ENCODE measurements at regions of chr6 and their contacts with region 1.

Region 1: DNA sequence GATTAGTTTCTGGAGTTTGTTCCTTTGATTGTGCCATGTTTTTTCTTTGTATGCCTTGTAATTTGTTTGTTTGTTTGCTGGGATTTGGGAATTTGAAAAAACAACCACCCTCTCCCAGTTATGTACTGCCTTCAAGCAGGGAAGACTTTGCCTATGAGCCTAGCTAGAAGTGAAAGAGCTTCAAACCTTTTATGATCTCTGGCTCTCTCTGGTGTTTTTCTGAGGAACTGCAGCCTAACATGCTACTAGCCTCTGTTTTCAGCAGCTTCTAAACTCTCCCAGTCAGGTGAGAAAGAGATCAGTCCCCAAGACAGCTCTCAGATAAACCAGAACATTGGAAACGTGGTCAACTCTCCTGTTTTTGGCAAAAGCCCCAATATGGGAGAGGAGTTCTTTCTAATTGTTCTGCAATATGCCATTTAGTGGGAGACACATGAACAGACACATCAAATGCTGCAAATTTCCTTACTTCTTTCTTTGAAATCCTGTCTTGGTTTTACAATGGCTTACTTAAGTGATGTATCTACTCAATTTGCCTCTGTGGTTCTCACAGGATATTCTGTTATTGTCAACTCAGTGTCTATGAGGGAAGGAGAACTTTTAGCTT is 58.9 kb upstream of the SERINC1 start:
- DNase-seq: peak; percentile 73
- H3K4me3 Mint-ChIP-seq: no peak overlapping the region
- H3K27ac Mint-ChIP-seq: no peak overlapping the region
- H3K4me1 Mint-ChIP-seq: no peaks in the 10 kb centered on the region
- H3K27me3 Mint-ChIP-seq: peaks cover 31% of the 10 kb centered on the region
- CTCF ChIP-seq: peak; percentile 86

Region 2: GRCh38 chr6:120876424-120876823 is 1654.1 kb before region 1 on chr6:
- CTCF ChIA-PET with region 1: no interaction called
- POLR2A ChIA-PET with region 1: no interaction called
- intact Hi-C with region 1: no loop called
- DNase-seq: no peak
- H3K4me3 Mint-ChIP-seq: no peak overlapping the region
- H3K27ac Mint-ChIP-seq: no peak overlapping the region
- H3K4me1 Mint-ChIP-seq: no peaks in the 10 kb centered on the region
- H3K27me3 Mint-ChIP-seq: no peaks in the 10 kb centered on the region
- CTCF ChIP-seq: no peak

Region 3: GRCh38 chr6:122432816-122433215 is 97.7 kb before region 1 on chr6:
- CTCF ChIA-PET with region 1: interaction called, 11 read pairs
- POLR2A ChIA-PET with region 1: no interaction called
- intact Hi-C with region 1: no loop called
- DNase-seq: no peak
- H3K4me3 Mint-ChIP-seq: no peak overlapping the region
- H3K27ac Mint-ChIP-seq: no peak overlapping the region
- H3K4me1 Mint-ChIP-seq: no peaks in the 10 kb centered on the region
- H3K27me3 Mint-ChIP-seq: no peaks in the 10 kb centered on the region
- CTCF ChIP-seq: no peak

Region 4: GRCh38 chr6:122484760-122485159 is 45.8 kb before region 1 on chr6:
- CTCF ChIA-PET with region 1: interaction called, 202 read pairs
- POLR2A ChIA-PET with region 1: no interaction called
- intact Hi-C with region 1: no loop called
- DNase-seq: no peak
- H3K4me3 Mint-ChIP-seq: no peak overlapping the region
- H3K27ac Mint-ChIP-seq: no peak overlapping the region
- H3K4me1 Mint-ChIP-seq: no peaks in the 10 kb centered on the region
- H3K27me3 Mint-ChIP-seq: no peaks in the 10 kb centered on the region
- CTCF ChIP-seq: no peak

Region 5: DNA sequence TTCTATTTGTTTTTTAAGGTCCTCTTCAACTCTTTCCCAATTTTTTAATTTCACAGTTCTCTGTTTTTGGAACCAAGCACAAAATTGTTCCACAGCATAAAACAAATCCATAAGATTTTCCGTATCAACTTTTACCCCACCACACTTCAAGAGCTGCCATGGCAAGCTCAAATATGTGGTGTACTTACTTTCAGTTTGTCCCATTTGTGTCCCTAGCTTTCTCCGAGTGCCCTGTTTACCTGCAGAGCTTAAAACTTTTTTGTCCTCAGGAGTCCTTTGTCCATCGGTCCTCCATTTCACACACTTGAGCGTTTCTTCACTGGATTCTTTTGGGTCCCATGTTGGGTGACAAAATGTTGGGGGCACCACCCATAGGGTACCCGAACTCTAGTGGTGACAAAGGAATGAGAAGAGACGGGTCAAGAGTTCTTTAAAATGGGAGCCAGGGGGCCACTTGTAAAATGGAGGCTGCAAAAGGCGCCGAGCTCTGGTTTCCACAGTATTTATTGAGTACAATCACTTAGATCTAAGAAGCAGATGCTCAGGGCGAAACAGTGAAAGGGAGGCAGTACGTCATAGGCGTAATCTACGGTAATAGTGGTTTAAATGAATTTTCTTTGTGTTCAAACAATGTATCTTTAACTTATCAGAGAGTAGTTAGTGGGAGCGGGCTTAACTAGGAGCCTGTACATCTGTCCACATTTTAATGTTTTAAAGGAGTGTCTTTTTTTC is 19.2 kb before region 1 on chr6:
- CTCF ChIA-PET with region 1: interaction called, 11 read pairs
- POLR2A ChIA-PET with region 1: no interaction called
- intact Hi-C with region 1: no loop called
- DNase-seq: no peak
- H3K4me3 Mint-ChIP-seq: no peak overlapping the region
- H3K27ac Mint-ChIP-seq: no peak overlapping the region
- H3K4me1 Mint-ChIP-seq: no peaks in the 10 kb centered on the region
- H3K27me3 Mint-ChIP-seq: no peaks in the 10 kb centered on the region
- CTCF ChIP-seq: no peak

Region 6: GRCh38 chr6:122548281-122548680 is 17.7 kb after region 1 on chr6:
- CTCF ChIA-PET with region 1: interaction called, 18 read pairs
- POLR2A ChIA-PET with region 1: no interaction called
- intact Hi-C with region 1: no loop called
- DNase-seq: no peak
- H3K4me3 Mint-ChIP-seq: no peak overlapping the region
- H3K27ac Mint-ChIP-seq: no peak overlapping the region
- H3K4me1 Mint-ChIP-seq: no peaks in the 10 kb centered on the region
- H3K27me3 Mint-ChIP-seq: no peaks in the 10 kb centered on the region
- CTCF ChIP-seq: no peak

Region 7: DNA sequence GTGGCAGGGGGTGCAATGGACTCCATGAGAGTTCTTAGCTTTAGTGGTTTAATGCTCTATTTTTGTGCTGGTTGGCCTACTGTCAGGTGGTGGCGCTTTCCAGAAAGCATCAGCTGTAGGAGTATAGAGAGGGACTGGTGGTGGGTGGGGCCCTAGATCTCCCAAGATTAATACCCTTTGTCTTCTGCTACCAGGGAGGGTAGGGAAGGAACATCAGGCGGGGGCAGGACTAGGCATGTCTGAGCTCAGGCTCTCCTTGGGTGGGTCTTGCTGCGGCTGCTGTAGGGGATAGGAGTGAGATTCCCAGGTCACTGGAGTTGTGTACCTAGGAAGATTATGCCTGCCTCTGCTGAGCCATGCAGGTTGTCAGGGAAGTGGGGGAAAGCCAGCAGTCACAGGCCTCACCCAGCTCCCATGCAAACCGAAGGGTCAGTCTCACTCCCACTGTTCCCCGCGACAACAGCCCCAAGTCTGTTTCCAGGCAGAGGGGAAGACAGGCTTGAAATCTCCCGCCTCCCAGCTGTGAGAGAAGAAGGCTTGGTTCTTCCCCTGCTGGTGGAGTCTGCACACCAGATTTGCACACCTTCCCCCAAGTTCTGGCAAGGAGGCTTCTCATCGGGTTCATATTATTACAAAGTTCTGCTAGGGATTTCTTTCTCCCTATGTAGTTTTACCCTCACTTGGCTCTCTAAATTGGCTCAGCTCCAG is 33.0 kb after region 1 on chr6:
- CTCF ChIA-PET with region 1: interaction called, 19 read pairs
- POLR2A ChIA-PET with region 1: interaction called, 3 read pairs
- intact Hi-C with region 1: no loop called
- DNase-seq: no peak
- H3K4me3 Mint-ChIP-seq: no peak overlapping the region
- H3K27ac Mint-ChIP-seq: no peak overlapping the region
- H3K4me1 Mint-ChIP-seq: no peaks in the 10 kb centered on the region
- H3K27me3 Mint-ChIP-seq: no peaks in the 10 kb centered on the region
- CTCF ChIP-seq: no peak

Region 8: GRCh38 chr6:122730775-122731386 is 200.3 kb after region 1 on chr6:
- CTCF ChIA-PET with region 1: interaction called, 12 read pairs
- POLR2A ChIA-PET with region 1: no interaction called
- intact Hi-C with region 1: no loop called
- DNase-seq: peak; percentile 63
- H3K4me3 Mint-ChIP-seq: no peak overlapping the region
- H3K27ac Mint-ChIP-seq: no peak overlapping the region
- H3K4me1 Mint-ChIP-seq: peaks cover 11% of the 10 kb centered on the region
- H3K27me3 Mint-ChIP-seq: no peaks in the 10 kb centered on the region
- CTCF ChIP-seq: peak; percentile 67

Measured in MCF 10A (cell line).